ENCODE measurements at regions of chr3 and their contacts with region 1.

Region 1: DNA sequence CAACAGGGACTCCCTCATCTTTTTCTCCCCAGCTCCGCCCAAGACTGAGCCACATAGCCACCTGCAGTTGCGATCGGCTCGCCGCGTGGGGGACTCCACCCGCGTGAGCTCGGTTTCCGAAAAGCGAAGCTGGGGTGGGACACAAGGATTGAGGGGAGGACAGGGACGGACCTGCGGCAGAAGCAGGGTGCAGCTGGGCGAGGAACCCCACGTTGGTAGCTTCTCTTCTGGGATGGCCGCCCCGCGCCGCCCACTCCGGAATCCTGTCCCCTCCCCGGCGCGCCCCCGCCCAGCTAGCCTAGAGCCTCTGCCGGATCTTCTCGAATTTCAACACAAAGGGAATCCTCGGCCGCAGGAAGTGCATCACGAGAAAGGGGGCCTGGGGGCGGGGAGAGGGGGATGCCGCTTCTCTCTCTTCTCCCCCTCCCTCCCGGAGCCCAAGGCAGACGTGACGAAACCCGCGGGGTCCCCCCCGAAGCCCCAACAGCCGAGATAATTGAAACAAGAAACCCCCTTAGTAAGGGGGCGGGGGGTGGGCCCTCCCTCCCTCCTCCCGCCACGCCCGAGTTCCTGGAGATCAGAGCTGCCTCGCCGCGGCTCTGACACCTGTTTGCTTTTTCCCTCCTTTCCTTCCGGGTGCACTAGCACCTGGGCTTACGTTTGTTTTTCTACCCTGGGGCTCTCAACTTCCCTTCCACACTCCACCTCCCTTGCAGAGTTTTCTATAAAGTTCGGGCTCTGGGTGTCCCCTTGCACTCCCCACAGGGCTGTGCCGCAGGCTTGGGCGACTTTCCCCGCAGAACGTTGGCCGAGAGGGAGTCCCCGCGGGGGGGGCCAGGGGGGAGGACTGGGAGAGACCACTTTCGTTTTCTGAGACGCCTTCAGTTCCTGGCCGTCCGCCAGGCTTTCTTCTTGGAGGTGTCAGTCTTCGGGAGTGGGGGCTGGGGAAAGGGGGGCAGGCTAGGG is 1.3 kb upstream of the KCNH8 start:
- DNase-seq: peak; percentile 63 to 92 (median 79)

Region 2: GRCh38 chr3:18998069-18998468 is 148.9 kb before region 1 on chr3:
- intact Hi-C with region 1: no loop called
- DNase-seq: no peak

Region 3: DNA sequence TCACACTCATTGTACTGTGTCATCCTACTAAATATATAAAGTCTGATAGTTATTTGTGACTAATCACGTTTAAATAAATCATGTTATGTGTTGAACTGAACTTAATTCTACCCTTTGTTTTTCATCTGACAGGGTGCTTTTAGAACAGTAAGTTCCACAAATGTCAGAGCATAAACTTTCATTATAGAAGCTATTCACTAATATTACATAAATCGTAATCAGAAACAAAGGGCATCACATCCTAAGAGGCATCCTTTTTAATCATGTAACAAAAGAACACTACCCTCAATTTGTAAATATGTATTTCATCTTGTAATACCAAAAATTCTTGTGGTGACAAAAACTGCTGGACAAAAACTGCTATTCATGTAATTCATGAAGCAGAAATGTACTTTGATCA is 52.2 kb after region 1 on chr3:
- intact Hi-C with region 1: loop called (anchors 5 kb)
- DNase-seq: no peak